CD8-positive, alpha-beta memory T cell (primary cell): ENCODE measurements at regions of chr18 and their contacts with region 1.

Region 1: DNA sequence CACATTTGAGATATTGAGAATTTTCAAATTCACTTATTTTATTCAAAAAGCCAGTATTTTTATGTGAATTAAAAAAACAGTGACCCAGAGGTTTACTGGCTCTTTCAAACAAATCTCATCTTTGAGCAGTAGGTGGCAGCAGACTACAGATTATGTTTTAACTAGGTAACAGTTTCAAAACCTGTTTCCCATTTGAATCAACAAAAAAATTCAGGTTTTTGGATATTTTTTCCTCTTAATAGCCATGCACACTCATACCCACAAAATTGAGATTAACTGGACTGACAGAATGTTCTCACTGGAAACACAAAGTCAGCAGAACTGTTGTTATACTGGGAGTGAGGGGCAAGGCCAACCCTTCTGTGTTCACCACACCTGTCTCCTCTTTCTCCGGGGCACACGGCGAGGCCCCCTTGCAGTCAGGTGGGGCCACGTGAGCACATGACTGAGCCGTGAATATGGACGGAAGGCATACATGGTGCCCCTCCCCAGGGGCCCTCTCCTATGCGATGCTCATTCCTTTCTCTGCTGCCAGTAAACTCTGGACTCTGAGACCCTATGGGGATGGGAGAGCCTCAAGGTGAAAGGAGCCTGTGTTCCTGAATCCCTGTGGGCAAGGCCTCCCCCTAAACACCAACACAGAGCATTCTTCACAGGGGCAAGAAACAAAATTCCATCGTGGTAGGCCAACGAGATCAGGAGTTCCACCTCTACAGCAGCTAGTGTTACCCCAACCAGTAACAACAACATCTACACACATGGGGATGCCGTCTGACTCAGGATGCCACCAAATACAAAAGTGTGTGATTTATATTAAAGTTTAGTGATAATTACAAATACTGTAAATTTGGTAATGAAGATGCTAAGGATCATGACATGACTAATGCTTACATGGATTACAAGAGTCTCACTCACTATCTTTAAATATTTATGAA is 80.4 kb downstream of the LPIN2 start:
- DNase-seq: peak in 4 of 5 donors; percentile 22 to 69 (median 60)
- H3K4me3 ChIP-seq: no peak overlapping the region
- H3K4me3 Mint-ChIP-seq: peak overlapping the region in 4 of 7 donors; percentile 8 to 42 (median 20)
- H3K27ac ChIP-seq: no peak overlapping the region
- H3K27ac Mint-ChIP-seq: peak overlapping the region; percentile 85 to 96 (median 91)
- H3K4me1 ChIP-seq: peaks cover 9% of the 10 kb centered on the region
- H3K4me1 Mint-ChIP-seq: peaks cover 29 to 47% (median 45%) of the 10 kb centered on the region in 3 donors
- H3K27me3 ChIP-seq: no peaks in the 10 kb centered on the region
- H3K27me3 Mint-ChIP-seq: no peaks in the 10 kb centered on the region

Region 2: GRCh38 chr18:2746274-2746673 is 186.2 kb before region 1 on chr18:
- CTCF ChIA-PET with region 1: no interaction called
- POLR2A ChIA-PET with region 1: no interaction called
- DNase-seq: no peak
- H3K4me3 ChIP-seq: no peak overlapping the region
- H3K4me3 Mint-ChIP-seq: no peak overlapping the region
- H3K27ac ChIP-seq: no peak overlapping the region
- H3K27ac Mint-ChIP-seq: peak overlapping the region in 7 of 8 donors; percentile 25 to 82 (median 46)
- H3K4me1 ChIP-seq: no peaks in the 10 kb centered on the region
- H3K4me1 Mint-ChIP-seq: peaks cover 24 to 54% (median 41%) of the 10 kb centered on the region in 3 donors
- H3K27me3 ChIP-seq: no peaks in the 10 kb centered on the region
- H3K27me3 Mint-ChIP-seq: no peaks in the 10 kb centered on the region

Region 3: GRCh38 chr18:2794159-2794558 is 138.4 kb before region 1 on chr18:
- CTCF ChIA-PET with region 1: no interaction called
- POLR2A ChIA-PET with region 1: no interaction called
- DNase-seq: no peak
- H3K4me3 ChIP-seq: no peak overlapping the region
- H3K4me3 Mint-ChIP-seq: no peak overlapping the region
- H3K27ac ChIP-seq: no peak overlapping the region
- H3K27ac Mint-ChIP-seq: peak overlapping the region in 1 of 8 donors; percentile 14
- H3K4me1 ChIP-seq: no peaks in the 10 kb centered on the region
- H3K4me1 Mint-ChIP-seq: peaks cover 2 to 16% (median 10%) of the 10 kb centered on the region in 3 donors
- H3K27me3 ChIP-seq: no peaks in the 10 kb centered on the region
- H3K27me3 Mint-ChIP-seq: peaks cover 0 to 2% of the 10 kb centered on the region in 2 donors

Region 4: GRCh38 chr18:2903006-2903405 is 29.5 kb before region 1 on chr18:
- CTCF ChIA-PET with region 1: no interaction called
- POLR2A ChIA-PET with region 1: no interaction called
- DNase-seq: no peak
- H3K4me3 ChIP-seq: no peak overlapping the region
- H3K4me3 Mint-ChIP-seq: no peak overlapping the region
- H3K27ac ChIP-seq: no peak overlapping the region
- H3K27ac Mint-ChIP-seq: no peak overlapping the region
- H3K4me1 ChIP-seq: peaks cover 8% of the 10 kb centered on the region
- H3K4me1 Mint-ChIP-seq: peaks cover 14 to 17% (median 14%) of the 10 kb centered on the region in 3 donors
- H3K27me3 ChIP-seq: no peaks in the 10 kb centered on the region
- H3K27me3 Mint-ChIP-seq: peaks cover 0 to 4% of the 10 kb centered on the region in 2 donors

Region 5: GRCh38 chr18:2978646-2979045 is 46.1 kb after region 1 on chr18:
- CTCF ChIA-PET with region 1: interaction called, 13 read pairs
- POLR2A ChIA-PET with region 1: interaction called, 8 read pairs
- DNase-seq: peak in 2 of 5 donors; percentile 16 to 18
- H3K4me3 ChIP-seq: peak overlapping the region; percentile 63
- H3K4me3 Mint-ChIP-seq: peak overlapping the region; percentile 75 to 92 (median 87)
- H3K27ac ChIP-seq: peak overlapping the region; percentile 5
- H3K27ac Mint-ChIP-seq: peak overlapping the region; percentile 78 to 99 (median 96)
- H3K4me1 ChIP-seq: peaks cover 76% of the 10 kb centered on the region
- H3K4me1 Mint-ChIP-seq: peaks cover 69 to 94% (median 94%) of the 10 kb centered on the region in 3 donors
- H3K27me3 ChIP-seq: no peaks in the 10 kb centered on the region
- H3K27me3 Mint-ChIP-seq: no peaks in the 10 kb centered on the region

Region 6: DNA sequence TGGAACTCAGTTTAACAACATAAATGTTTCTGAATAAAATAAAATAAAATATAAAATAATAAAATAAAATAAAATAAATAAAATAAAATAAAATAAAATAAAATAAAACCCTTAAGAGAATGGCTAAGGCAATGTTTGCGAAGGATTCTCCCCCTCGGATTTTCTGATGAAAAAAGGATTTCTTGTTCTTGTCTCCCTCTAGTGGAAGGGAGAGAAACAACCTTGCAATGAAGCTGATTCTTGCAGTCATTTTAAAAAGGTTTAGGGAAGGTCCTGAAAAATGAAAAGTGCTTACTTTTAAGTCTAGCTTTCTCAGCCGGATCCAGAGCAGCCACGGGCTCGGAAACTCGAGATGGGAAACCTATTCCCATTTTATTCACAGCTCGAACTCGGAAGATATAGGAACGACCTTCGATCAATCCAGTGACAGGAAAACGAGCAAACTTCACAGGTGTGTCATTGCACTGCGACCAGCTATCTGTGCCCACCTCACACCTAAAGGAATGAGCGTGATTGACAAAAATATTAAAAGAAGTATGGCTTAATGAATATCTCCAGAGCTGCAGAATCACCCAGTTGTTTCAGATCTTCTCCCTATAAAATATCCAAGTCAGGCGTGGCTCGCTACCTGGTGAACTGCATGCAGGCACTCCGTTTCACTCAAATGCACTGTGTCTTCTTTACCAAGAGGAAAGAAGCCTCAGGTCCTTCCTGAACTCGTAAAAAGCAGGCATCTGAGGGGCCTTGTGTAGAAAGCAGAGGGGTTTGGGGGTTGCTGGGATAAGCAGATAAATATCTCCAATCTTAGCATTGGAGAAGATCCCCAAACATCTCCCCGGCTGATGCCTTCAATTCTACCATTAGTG is 219.1 kb after region 1 on chr18:
- CTCF ChIA-PET with region 1: interaction called, 10 read pairs
- POLR2A ChIA-PET with region 1: no interaction called
- DNase-seq: peak in 2 of 5 donors; percentile 19 to 37
- H3K4me3 ChIP-seq: no peak overlapping the region
- H3K4me3 Mint-ChIP-seq: no peak overlapping the region
- H3K27ac ChIP-seq: no peak overlapping the region
- H3K27ac Mint-ChIP-seq: no peak overlapping the region
- H3K4me1 ChIP-seq: no peaks in the 10 kb centered on the region
- H3K4me1 Mint-ChIP-seq: peaks cover 6 to 13% (median 9%) of the 10 kb centered on the region in 3 donors
- H3K27me3 ChIP-seq: no peaks in the 10 kb centered on the region
- H3K27me3 Mint-ChIP-seq: no peaks in the 10 kb centered on the region

Region 7: DNA sequence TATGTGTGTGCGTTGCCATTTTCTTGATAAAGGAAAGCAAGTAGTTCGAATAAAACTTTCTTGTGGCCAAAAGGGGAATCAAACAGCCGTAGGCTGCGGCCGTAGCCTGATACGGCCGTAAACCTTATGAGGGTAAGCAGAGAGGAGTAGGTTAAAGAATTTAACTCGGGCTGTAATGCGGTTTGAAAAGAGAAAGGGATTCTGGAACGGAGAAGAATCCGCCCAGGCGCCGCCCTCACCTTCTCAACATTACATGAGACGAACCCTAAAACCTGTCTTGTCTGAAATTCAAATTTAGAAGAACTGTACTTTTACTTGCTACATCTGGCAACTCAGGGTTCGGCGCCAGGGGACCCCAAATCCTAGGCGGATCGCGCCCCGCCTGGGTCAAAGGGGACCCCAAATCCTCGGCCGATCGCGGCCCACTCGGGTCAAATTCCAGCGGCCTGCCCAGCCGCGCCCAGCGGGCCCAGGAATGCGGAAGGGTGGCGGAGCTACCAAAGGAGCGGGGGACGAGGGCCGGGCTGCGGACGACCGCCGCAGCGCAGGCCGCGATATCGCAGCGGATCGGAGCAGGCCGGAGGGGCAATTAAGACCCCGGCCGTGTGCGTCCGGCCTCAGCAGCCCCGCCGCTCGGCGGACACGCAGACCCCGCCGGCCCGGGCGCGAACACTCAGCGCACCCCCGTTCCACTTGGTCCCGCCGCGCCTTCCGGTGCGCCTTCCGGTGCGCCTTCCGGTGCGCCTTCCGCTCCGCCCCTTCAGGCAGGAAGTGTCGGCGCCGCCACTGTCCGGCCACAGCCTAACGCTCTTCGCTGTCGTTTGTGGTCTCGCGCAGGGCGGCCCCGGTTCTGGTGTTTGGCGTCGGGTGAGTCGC is 329.1 kb after region 1 on chr18 and contains the start of gene MYL12B:
- CTCF ChIA-PET with region 1: no interaction called
- POLR2A ChIA-PET with region 1: no interaction called
- DNase-seq: peak; percentile 81 to 91 (median 85)
- H3K4me3 ChIP-seq: peak within 1 kb of the TSS; percentile 82
- H3K4me3 Mint-ChIP-seq: peak within 1 kb of the TSS; percentile 90 to 99 (median 98)
- H3K27ac ChIP-seq: peak within 1 kb of the TSS; percentile 95
- H3K27ac Mint-ChIP-seq: peak within 1 kb of the TSS; percentile 96 to 100 (median 100)
- H3K4me1 ChIP-seq: peaks cover 77% of the 10 kb centered on the region
- H3K4me1 Mint-ChIP-seq: peaks cover 67 to 88% (median 86%) of the 10 kb centered on the region in 3 donors
- H3K27me3 ChIP-seq: no peaks in the 10 kb centered on the region
- H3K27me3 Mint-ChIP-seq: no peaks in the 10 kb centered on the region
- total RNA-seq, gene MYL12B: 251 to 252 TPM